Activated CD8-positive, alpha-beta T cell treated with anti-CD3 and anti-CD28 coated beads for 36 hours (primary cell): ENCODE measurements at regions of chr18 and their contacts with region 1.

Region 1: DNA sequence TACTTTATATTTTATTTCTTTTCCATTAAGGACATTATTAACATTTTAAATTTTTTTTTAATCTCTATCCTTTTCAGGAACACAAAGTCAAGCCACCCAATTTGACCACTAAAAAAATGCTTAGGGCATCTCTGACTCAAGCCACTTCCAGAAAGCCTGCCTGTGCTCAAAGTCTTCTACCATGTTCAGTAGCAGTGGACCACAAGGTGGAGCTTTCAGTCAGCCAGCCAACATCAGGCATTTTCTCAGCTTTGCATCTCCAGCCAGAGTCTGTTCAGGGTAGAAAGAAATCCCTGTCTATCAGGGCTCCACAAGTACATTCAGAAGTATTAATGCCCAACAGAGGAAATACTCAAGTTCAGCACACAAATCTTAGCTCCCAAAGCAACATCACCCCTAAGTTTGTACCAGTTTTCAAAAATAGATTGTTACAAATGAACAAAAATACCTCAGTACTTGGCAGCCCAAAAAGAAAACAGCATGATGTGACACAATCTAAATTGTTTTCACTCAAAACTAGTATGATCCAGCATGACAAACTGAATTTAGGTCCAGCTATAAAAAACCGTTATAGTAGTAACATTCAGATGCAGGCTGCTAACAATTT is 37.6 kb downstream of the C18orf63 start:
- DNase-seq: peak; percentile 72
- ATAC-seq: peak; percentile 86
- H3K4me3 Mint-ChIP-seq: no peak overlapping the region
- H3K27ac Mint-ChIP-seq: no peak overlapping the region
- H3K4me1 Mint-ChIP-seq: peaks cover 6% of the 10 kb centered on the region
- H3K27me3 Mint-ChIP-seq: no peaks in the 10 kb centered on the region
- CTCF ChIP-seq: peak; percentile 73

Region 2: DNA sequence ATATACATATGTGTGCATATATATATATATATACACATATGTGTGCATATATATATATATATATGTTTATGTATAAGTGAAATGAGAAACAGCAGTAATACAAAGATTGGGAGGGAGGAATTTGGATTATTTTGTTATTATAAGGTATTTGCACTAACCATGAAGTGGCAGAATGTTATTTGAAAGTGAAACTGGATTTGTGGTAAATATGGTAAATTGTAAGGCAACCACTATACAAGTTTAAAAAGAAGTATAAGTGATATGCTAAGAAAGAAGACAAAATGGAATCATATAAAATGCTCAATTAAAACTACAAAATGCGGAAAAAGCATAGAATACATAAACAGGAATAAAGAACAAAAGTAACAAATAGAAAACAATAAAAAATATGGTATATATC is 243.1 kb before region 1 on chr18:
- CTCF ChIA-PET with region 1: no interaction called
- POLR2A ChIA-PET with region 1: no interaction called
- intact Hi-C with region 1: no loop called
- DNase-seq: no peak
- ATAC-seq: no peak
- H3K4me3 Mint-ChIP-seq: no peak overlapping the region
- H3K27ac Mint-ChIP-seq: no peak overlapping the region
- H3K4me1 Mint-ChIP-seq: peaks cover 20% of the 10 kb centered on the region
- H3K27me3 Mint-ChIP-seq: no peaks in the 10 kb centered on the region
- CTCF ChIP-seq: no peak

Region 3: GRCh38 chr18:74183130-74183529 is 170.1 kb before region 1 on chr18:
- CTCF ChIA-PET with region 1: no interaction called
- POLR2A ChIA-PET with region 1: no interaction called
- intact Hi-C with region 1: no loop called
- DNase-seq: no peak
- ATAC-seq: no peak
- H3K4me3 Mint-ChIP-seq: no peak overlapping the region
- H3K27ac Mint-ChIP-seq: no peak overlapping the region
- H3K4me1 Mint-ChIP-seq: no peaks in the 10 kb centered on the region
- H3K27me3 Mint-ChIP-seq: peaks cover 8% of the 10 kb centered on the region
- CTCF ChIP-seq: no peak

Region 4: DNA sequence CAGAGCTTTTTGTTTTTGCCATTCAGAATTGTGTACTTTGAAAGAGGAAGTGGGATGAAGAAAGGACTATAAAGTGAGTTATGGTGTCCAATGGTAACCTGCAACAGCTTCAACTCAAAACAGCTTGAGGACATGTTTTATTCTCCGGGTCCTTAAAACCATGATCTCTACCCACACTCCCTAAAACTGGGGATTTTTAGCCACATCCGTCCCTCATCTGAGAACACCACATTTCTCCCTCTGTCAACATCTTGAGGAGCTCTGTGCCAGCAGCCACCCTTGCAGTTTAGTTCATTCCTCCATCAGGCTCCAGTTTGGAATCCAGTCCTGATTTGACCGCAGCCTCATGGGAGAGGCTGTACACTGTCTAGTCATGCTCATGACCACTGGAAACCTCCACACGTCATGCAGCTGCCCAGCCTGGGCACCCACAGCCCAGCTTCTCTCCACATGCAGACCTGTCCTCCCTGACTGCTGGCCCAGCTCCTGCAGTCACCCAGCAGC is 25.0 kb after region 1 on chr18:
- CTCF ChIA-PET with region 1: interaction called, 11 read pairs
- POLR2A ChIA-PET with region 1: interaction called, 5 read pairs
- intact Hi-C with region 1: no loop called
- DNase-seq: peak; percentile 34
- ATAC-seq: peak; percentile 51
- H3K4me3 Mint-ChIP-seq: no peak overlapping the region
- H3K27ac Mint-ChIP-seq: peak overlapping the region; percentile 72
- H3K4me1 Mint-ChIP-seq: peaks cover 38% of the 10 kb centered on the region
- H3K27me3 Mint-ChIP-seq: no peaks in the 10 kb centered on the region
- CTCF ChIP-seq: no peak

Region 5: DNA sequence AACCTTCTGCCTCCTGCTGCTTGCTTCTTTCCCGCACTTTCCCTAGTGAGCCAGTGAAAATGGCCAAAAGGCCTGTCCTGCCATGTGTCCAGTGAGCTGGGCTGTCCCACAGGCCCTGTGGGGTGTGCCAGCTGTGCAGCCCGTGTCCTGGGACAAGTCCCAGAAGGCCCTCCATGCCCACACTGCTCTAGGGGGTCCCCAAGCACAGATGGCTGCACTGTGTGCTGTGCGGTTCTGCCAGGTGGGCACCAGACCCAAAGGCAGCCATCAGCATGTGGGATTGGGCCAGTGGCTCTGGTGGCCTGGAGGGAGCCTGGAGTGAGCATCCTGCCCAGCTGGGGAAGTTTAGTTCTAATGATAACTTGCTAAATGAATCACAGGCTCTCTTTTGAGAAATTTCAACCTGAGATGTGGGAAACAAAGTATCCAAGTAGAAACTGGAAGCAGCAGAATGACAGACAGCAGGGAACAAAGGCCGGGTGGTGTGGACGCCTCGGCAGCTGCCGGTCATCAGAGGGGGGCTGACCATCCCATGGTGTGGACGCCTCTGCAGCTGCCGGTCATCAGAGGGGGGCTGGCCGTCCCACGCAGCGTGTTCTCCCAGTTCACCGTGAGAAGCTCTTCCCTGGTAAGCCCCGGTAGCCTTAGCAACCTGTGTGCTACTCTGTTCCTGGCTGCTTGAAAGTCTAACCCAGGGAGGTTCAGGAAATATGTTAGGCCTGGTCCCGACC is 133.0 kb after region 1 on chr18:
- CTCF ChIA-PET with region 1: interaction called, 198 read pairs
- POLR2A ChIA-PET with region 1: no interaction called
- intact Hi-C with region 1: no loop called
- DNase-seq: no peak
- ATAC-seq: no peak
- H3K4me3 Mint-ChIP-seq: no peak overlapping the region
- H3K27ac Mint-ChIP-seq: peak overlapping the region; percentile 66
- H3K4me1 Mint-ChIP-seq: peaks cover 16% of the 10 kb centered on the region
- H3K27me3 Mint-ChIP-seq: no peaks in the 10 kb centered on the region
- CTCF ChIP-seq: no peak